Naive thymus-derived CD4-positive, alpha-beta T cell (primary cell): ENCODE measurements at regions of chr12 and their contacts with region 1.

Region 1: GRCh38 chr12:6613776-6614512 is 6.8 kb upstream of the CHD4 start:
- DNase-seq: peak in 2 of 9 donors; percentile 28 to 32
- ATAC-seq: peak; percentile 74
- H3K4me3 ChIP-seq: no peak overlapping the region
- H3K4me3 Mint-ChIP-seq: peak overlapping the region in 7 of 10 donors; percentile 30 to 70 (median 36)
- H3K27ac ChIP-seq: peak overlapping the region; percentile 64
- H3K27ac Mint-ChIP-seq: peak overlapping the region; percentile 51 to 91 (median 87)
- H3K4me1 ChIP-seq: peaks cover 20 to 30% of the 10 kb centered on the region in 2 donors
- H3K4me1 Mint-ChIP-seq: peaks cover 26 to 54% (median 48%) of the 10 kb centered on the region in 7 donors
- H3K27me3 ChIP-seq: no peaks in the 10 kb centered on the region
- H3K27me3 Mint-ChIP-seq: no peaks in the 10 kb centered on the region

Region 2: GRCh38 chr12:6632026-6632983 is 18.4 kb after region 1 on chr12:
- CTCF ChIA-PET with region 1: interaction called, 3 read pairs
- POLR2A ChIA-PET with region 1: interaction called, 46 read pairs
- intact Hi-C with region 1: loop called (anchors 1 to 2 kb)
- DNase-seq: peak in 8 of 9 donors; percentile 43 to 75 (median 66)
- ATAC-seq: peak; percentile 81
- H3K4me3 ChIP-seq: peak overlapping the region; percentile 56
- H3K4me3 Mint-ChIP-seq: peak overlapping the region; percentile 80 to 94 (median 88)
- H3K27ac ChIP-seq: peak overlapping the region; percentile 81
- H3K27ac Mint-ChIP-seq: peak overlapping the region; percentile 94 to 99 (median 97)
- H3K4me1 ChIP-seq: peaks cover 26 to 40% of the 10 kb centered on the region in 2 donors
- H3K4me1 Mint-ChIP-seq: peaks cover 46 to 68% (median 58%) of the 10 kb centered on the region in 7 donors
- H3K27me3 ChIP-seq: no peaks in the 10 kb centered on the region
- H3K27me3 Mint-ChIP-seq: no peaks in the 10 kb centered on the region

Region 3: GRCh38 chr12:6647083-6647604 is 33.2 kb after region 1 on chr12 and contains the start of gene ACRBP:
- CTCF ChIA-PET with region 1: interaction called, 18 read pairs
- POLR2A ChIA-PET with region 1: interaction called, 7 read pairs
- intact Hi-C with region 1: loop called in 1 of 2 experiments (anchors 1 kb)
- DNase-seq: peak in 4 of 9 donors; percentile 19 to 64 (median 29)
- ATAC-seq: peak; percentile 84
- H3K4me3 ChIP-seq: peak within 1 kb of the TSS; percentile 43
- H3K4me3 Mint-ChIP-seq: peak within 1 kb of the TSS; percentile 70 to 88 (median 76)
- H3K27ac ChIP-seq: peak within 1 kb of the TSS; percentile 37
- H3K27ac Mint-ChIP-seq: peak within 1 kb of the TSS in 6 of 9 donors; percentile 16 to 89 (median 62)
- H3K4me1 ChIP-seq: peaks cover 0 to 5% of the 10 kb centered on the region in 2 donors
- H3K4me1 Mint-ChIP-seq: peaks cover 15 to 26% (median 18%) of the 10 kb centered on the region in 7 donors
- H3K27me3 ChIP-seq: no peaks in the 10 kb centered on the region
- H3K27me3 Mint-ChIP-seq: peaks cover 0 to 3% (median 0%) of the 10 kb centered on the region in 5 donors
- total RNA-seq, gene ACRBP: 2.3 to 23.0 (median 6.6) TPM

Region 4: DNA sequence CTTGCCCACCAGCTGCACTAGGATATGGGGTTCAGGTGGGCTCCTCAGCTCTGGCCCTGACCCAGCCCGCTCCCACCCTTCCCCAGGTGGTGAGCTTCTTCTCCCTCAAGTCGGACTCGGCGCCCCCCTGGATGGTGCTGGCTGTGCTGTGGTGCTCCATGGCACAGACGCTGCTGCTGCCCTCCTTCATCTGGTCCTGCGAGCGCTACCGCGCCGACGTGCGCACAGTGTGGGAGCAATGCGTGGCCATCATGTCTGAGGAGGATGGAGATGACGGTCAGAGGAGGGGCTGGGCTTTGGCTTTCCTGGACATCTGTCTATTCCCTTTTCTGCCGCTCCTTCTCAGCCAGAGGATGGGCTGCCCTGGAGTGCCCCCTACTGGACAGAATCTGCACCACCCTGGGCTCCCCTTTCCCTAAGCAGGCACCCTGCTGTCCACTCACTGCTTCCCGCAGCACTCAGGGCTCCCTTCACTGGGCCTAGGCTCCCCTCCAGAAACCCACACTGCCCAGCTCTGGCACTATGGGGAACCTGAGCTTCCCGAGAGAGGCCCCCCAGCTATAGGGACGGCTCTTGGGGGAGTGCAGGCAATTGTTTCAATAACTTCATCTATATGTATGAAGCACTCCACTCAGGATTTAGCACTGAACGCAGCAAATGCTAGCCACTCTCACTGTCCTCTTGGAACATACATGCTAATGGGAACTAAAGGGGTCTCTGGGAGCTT is 211.6 kb after region 1 on chr12:
- CTCF ChIA-PET with region 1: interaction called, 4 read pairs
- POLR2A ChIA-PET with region 1: no interaction called
- intact Hi-C with region 1: loop called (anchors 1 kb)
- DNase-seq: peak; percentile 69 to 89 (median 78)
- ATAC-seq: peak; percentile 79
- H3K4me3 ChIP-seq: no peak overlapping the region
- H3K4me3 Mint-ChIP-seq: peak overlapping the region in 7 of 10 donors; percentile 5 to 65 (median 35)
- H3K27ac ChIP-seq: no peak overlapping the region
- H3K27ac Mint-ChIP-seq: peak overlapping the region in 4 of 9 donors; percentile 22 to 84 (median 53)
- H3K4me1 ChIP-seq: peaks cover 4 to 13% of the 10 kb centered on the region in 2 donors
- H3K4me1 Mint-ChIP-seq: peaks cover 27 to 42% (median 39%) of the 10 kb centered on the region in 7 donors
- H3K27me3 ChIP-seq: peaks cover 0 to 12% of the 10 kb centered on the region in 2 donors
- H3K27me3 Mint-ChIP-seq: peaks cover 9 to 63% (median 26%) of the 10 kb centered on the region in 5 donors

Region 5: GRCh38 chr12:6833189-6833890 is 219.4 kb after region 1 on chr12:
- CTCF ChIA-PET with region 1: interaction called, 4 read pairs
- POLR2A ChIA-PET with region 1: interaction called, 4 read pairs
- intact Hi-C with region 1: loop called (anchors 1 kb)
- DNase-seq: no peak
- ATAC-seq: no peak
- H3K4me3 ChIP-seq: no peak overlapping the region
- H3K4me3 Mint-ChIP-seq: no peak overlapping the region
- H3K27ac ChIP-seq: no peak overlapping the region
- H3K27ac Mint-ChIP-seq: no peak overlapping the region
- H3K4me1 ChIP-seq: peaks cover 0 to 4% of the 10 kb centered on the region in 2 donors
- H3K4me1 Mint-ChIP-seq: peaks cover 0 to 16% (median 12%) of the 10 kb centered on the region in 7 donors
- H3K27me3 ChIP-seq: peaks cover 0 to 4% of the 10 kb centered on the region in 2 donors
- H3K27me3 Mint-ChIP-seq: peaks cover 0 to 32% (median 0%) of the 10 kb centered on the region in 5 donors